PC-3 (cell line): ENCODE measurements at regions of chr5 and their contacts with region 1.

Region 1: GRCh38 chr5:143302341-143302740 is 101.1 kb downstream of the NR3C1 start:
- DNase-seq: peak; percentile 26
- ATAC-seq: peak; percentile 75
- H3K4me3 ChIP-seq: no peak overlapping the region
- H3K27ac ChIP-seq: no peak overlapping the region
- H3K4me1 ChIP-seq: peaks cover 9% of the 10 kb centered on the region
- H3K27me3 ChIP-seq: no peaks in the 10 kb centered on the region
- CTCF ChIP-seq: no peak

Region 2: DNA sequence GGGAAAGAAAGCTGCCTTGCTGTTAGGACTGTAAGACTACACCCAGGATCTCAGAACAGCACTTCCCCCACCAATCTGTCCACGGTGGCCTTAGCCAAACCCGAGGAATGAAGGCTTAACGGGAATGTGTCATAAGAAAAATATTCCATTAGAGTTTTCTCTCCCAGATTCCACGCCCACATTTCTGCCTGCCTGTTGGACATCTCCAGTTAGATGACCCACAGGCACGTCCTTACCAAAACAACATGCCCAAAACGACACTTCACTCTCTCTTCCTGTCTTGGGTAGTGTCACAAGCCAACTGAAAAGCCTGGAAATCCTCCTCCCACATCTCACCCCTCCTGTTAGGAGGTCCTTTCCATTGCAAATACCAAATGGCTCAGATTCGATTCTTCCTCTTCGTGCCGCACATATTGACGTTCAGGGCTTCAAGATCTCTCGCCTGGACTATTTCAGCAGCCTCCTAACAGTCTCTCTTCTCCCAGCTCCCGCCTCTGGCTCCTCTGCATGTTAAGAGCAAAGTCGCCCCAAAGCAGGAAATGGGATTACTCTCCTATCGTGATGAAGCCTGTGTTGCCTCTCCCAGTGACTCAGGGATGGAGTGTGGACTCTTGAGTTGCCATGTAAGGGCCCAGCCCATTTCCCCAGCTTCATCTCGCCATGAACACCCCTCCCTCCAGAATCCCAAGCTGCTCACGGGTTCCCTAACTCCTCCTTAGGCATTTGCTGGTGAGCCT is 58.2 kb before region 1 on chr5:
- CTCF ChIA-PET with region 1: no interaction called
- POLR2A ChIA-PET with region 1: no interaction called
- intact Hi-C with region 1: loop called (anchors 2 kb)
- DNase-seq: peak; percentile 95
- ATAC-seq: peak; percentile 78
- H3K4me3 ChIP-seq: peak overlapping the region; percentile 52
- H3K27ac ChIP-seq: peak overlapping the region; percentile 99
- H3K4me1 ChIP-seq: peaks cover 58% of the 10 kb centered on the region
- H3K27me3 ChIP-seq: no peaks in the 10 kb centered on the region
- CTCF ChIP-seq: no peak

Region 3: DNA sequence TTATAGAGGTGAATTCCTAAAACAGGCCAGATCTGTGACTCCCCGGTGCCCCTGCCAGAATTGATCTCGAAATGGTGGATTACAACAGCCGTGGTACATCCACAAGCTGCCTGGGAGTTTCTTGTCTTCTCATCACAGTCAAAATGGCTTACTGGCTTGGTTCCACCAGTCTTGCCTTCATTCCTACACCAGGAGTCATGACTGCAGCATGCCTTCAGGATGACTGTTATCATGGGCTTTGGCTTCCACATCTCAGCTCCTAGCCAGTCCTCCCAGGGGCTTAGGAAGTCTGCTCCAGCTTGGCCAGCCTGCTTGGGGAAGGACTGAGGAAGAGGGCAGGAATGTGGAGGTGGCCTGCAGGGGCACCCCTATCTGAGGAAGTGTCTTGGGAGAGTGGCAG is 234.0 kb after region 1 on chr5:
- CTCF ChIA-PET with region 1: no interaction called
- POLR2A ChIA-PET with region 1: no interaction called
- intact Hi-C with region 1: no loop called
- DNase-seq: peak; percentile 88
- ATAC-seq: peak; percentile 77
- H3K4me3 ChIP-seq: no peak overlapping the region
- H3K27ac ChIP-seq: peak overlapping the region; percentile 56
- H3K4me1 ChIP-seq: peaks cover 15% of the 10 kb centered on the region
- H3K27me3 ChIP-seq: no peaks in the 10 kb centered on the region
- CTCF ChIP-seq: no peak